ENCODE measurements at regions of chr20 and their contacts with region 1.

Region 1: GRCh38 chr20:55693641-55694040 is 311.7 kb downstream of the CBLN4 start:
- DNase-seq: no peak
- ATAC-seq: no peak
- H3K4me3 ChIP-seq: no peak overlapping the region
- H3K27ac ChIP-seq: no peak overlapping the region
- H3K4me1 ChIP-seq: no peaks in the 10 kb centered on the region
- H3K27me3 ChIP-seq: no peaks in the 10 kb centered on the region
- CTCF ChIP-seq: no peak
- EP300 ChIP-seq: no peak
- POLR2A ChIP-seq: no peak
- RAD21 ChIP-seq: no peak

Region 2: DNA sequence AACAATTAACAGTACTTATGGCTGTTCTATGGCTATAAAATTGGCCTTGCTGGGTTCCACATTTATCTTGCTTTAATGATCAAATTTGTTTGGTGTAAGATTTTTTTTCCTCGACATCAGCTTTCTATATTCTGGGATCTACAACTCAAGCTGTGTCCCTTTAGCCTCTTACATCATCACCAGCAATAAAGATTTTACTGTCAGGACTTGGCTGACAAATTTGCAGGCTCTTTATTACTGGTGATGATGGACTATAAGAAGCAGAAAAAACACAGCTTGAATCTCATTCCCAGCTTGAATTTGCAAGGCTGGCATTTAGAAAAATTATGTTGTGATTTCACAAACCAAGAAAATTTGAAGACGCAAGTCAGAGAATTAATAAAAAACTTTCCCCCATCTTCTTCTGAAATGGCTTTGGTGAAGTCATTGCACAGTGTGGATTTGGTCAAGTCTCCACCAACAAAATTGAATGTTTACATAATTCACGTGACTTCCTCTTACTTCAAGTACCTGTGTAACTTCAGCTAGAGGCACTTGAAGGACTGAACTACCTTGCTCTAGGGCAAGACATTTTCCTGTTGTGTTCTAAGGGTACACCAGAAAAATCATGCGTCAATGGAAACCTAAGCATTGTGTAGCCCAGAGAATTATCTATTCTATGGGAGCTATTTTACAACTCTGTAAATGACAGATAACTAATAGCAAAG is 136.6 kb after region 1 on chr20:
- CTCF ChIA-PET with region 1: no interaction called
- POLR2A ChIA-PET with region 1: no interaction called
- in situ Hi-C with region 1: loop called (anchors 10 kb)
- intact Hi-C with region 1: no loop called
- DNase-seq: no peak
- ATAC-seq: no peak
- H3K4me3 ChIP-seq: no peak overlapping the region
- H3K27ac ChIP-seq: no peak overlapping the region
- H3K4me1 ChIP-seq: no peaks in the 10 kb centered on the region
- H3K27me3 ChIP-seq: no peaks in the 10 kb centered on the region
- CTCF ChIP-seq: no peak
- EP300 ChIP-seq: no peak
- POLR2A ChIP-seq: no peak
- RAD21 ChIP-seq: no peak